Tibial artery (tissue), 4 donors: ENCODE measurements at regions of chr5 and their contacts with region 1.

Region 1: GRCh38 chr5:150458819-150459557 is 9.4 kb upstream of the RPS14 start:
- DNase-seq: peak; percentile 60 to 83
- H3K4me3 ChIP-seq: peak overlapping the region; percentile 32 to 43
- H3K27ac ChIP-seq: no peak overlapping the region
- H3K4me1 ChIP-seq: peaks cover 0 to 8% (median 4%) of the 10 kb centered on the region in 4 donors
- H3K27me3 ChIP-seq: no peaks in the 10 kb centered on the region
- CTCF ChIP-seq: peak; percentile 79 to 88

Region 2: DNA sequence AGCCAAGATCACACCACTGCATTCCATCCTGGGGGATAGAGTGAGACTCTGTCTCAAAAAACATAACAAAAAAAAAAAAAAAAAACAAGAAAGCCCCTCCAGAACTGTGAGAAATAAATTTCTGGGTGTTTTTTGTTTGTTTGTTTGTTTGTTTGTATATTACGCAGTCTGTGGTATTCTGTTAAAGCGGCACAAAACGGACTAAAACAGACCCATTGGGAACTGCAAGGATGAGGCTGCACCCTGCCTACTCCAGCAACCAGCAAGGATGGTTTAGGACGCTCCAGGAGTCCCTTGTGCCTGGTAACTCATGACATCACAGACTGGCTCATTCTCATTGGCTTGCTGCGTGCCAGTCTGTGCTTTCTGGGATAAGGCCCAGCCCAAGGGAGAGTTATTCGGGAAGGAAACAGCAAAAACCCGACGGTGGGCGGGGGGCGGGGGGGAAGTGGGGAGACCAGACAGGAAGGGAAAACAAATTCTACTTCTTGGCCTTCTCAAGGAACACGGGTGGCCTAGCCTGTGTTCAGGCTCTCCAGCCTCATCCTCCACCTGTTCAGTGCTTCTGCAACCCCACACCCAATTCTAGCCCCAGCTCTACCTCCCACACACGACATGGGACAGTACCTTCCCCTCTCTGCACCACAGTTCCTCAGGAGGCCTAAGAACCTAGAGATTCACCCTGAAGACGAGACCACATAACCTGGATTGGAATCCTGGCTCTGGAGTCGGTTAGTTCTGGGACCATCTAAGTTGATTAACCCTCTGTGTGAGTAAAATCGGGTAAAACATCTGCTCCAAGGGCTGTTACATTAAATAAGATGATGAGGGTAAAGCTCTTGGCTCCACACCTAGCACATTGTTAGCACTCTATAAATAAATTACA is 49.1 kb before region 1 on chr5:
- intact Hi-C with region 1: no loop called
- DNase-seq: peak; percentile 87 to 90
- H3K4me3 ChIP-seq: peak overlapping the region; percentile 22 to 38
- H3K27ac ChIP-seq: peak overlapping the region; percentile 63 to 65
- H3K4me1 ChIP-seq: peaks cover 0 to 19% (median 11%) of the 10 kb centered on the region in 4 donors
- H3K27me3 ChIP-seq: no peaks in the 10 kb centered on the region
- CTCF ChIP-seq: no peak

Region 3: DNA sequence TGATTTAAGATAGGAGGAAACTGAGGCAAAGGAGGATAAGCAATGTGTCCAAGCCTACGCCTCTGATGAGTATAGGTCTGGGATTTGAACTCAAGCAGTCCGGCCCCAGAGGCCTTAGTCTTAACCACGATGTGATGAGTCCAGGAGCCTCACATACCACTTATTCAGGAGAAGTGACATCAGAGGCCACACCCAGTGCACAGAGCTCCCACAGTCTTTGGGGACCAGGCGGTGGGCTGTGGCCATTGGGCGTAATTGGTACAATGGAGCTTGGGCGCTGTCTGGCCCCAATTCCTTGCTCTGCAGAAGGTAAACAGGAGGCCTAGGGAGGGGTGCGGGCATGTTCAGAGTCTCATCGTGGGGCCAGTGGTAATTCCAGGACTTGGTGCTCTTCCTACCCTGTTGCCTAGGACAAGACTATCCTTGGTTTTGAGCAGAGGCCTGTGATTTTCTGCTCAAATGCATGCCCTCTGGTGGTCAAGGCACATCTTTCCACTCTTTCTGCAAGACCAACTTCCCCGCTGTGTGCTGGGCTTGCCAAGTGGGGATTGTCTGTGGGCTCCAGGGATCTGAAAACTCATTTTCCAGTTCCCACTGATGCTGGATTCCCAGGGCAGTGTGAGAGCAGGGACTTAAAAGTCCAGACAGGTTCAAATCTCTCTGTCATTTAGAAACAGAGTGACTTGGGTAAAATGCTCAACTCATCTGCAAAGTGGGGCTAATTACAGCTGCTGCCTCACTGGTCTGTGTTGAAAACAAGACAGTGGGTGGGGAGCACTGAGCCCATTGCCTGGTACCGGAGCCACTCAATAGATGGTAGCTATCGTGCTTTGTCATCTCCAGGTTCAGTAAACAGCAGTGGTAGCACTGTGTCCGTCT is 64.7 kb after region 1 on chr5:
- intact Hi-C with region 1: loop called (anchors 2 kb)
- DNase-seq: peak in 1 of 2 donors; percentile 36
- H3K4me3 ChIP-seq: no peak overlapping the region
- H3K27ac ChIP-seq: peak overlapping the region in 1 of 2 donors; percentile 11
- H3K4me1 ChIP-seq: peaks cover 0 to 81% (median 58%) of the 10 kb centered on the region in 4 donors
- H3K27me3 ChIP-seq: no peaks in the 10 kb centered on the region
- CTCF ChIP-seq: peak; percentile 57 to 68

Region 4: DNA sequence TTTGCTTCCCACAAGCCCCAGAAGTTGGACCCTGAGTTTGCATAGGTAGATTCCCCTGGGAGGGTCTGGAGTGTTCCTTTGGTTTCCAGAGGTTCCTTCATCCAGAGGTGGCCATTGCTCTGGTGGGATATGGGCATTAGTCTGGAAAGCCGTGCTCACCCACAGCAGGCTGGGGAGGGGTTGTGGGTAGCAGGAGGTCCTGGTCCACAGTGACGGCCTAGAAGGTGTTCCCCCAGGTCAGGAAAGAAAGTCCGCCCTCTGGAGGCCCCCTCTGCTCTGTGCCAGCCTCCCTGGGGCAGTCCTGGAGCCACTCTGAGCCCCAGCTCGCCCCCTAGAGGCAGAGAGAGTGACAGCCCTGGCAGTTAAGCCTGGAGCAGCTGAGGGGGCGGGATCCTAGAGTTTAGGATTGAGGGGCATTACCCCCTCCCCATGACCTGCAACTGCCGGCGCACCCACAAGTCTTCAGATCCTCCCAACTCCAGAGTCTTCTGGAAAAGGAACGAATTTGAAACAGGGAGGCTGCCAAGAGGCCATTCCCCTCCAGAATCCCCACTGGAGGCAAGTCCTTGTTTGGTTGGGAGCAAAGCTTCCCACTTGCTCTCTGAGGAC is 85.7 kb after region 1 on chr5:
- intact Hi-C with region 1: loop called (anchors 5 kb)
- DNase-seq: peak; percentile 65 to 74
- H3K4me3 ChIP-seq: no peak overlapping the region
- H3K27ac ChIP-seq: peak overlapping the region; percentile 31 to 58
- H3K4me1 ChIP-seq: peaks cover 0 to 42% (median 26%) of the 10 kb centered on the region in 4 donors
- H3K27me3 ChIP-seq: no peaks in the 10 kb centered on the region
- CTCF ChIP-seq: peak; percentile 58 to 63

Region 5: DNA sequence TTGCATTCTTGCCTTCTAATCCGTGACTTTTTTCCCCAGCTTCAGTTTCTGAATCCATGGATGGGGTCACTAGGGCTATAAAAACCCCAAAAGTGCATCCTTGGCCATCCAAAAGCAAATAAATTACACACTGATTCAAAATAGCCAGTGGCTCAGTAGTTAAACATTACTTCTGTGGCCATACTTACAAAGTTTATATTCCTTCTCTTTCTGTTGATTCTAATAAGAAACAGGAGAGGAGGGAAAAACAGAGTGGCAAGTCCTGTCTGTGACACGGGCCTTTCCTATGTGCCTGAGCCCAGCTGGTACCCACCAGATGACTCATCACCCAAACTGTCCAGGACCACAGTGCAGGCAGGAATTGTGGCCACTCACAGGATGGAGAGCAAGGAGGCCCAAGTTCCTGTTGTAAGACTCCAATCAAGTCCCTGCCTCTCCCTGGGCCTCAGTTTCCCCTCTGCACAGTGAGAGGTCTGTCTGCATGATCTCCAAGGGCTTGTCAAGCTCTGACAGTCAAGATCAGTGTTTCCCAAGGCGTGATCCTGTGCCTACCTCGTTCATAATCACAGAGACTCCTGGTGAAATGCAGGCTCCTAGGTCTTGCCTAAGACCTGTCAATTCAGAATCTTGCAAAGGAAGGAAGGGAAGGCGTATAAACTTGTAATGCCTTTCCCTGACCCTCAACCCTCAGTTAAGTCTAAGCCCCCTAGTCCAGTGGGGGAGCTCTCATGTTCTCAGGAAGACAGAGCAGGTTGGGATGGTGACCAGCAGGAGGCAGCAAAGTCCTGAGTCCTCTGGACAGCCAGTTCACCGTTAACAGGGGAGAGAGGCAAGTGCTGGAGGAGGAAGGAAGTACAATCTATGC is 592.3 kb after region 1 on chr5:
- intact Hi-C with region 1: no loop called
- DNase-seq: peak; percentile 79 to 88
- H3K4me3 ChIP-seq: no peak overlapping the region
- H3K27ac ChIP-seq: no peak overlapping the region
- H3K4me1 ChIP-seq: peaks cover 0 to 7% (median 3%) of the 10 kb centered on the region in 4 donors
- H3K27me3 ChIP-seq: no peaks in the 10 kb centered on the region
- CTCF ChIP-seq: peak; percentile 82 to 90